ENCODE measurements at regions of chr19 and their contacts with region 1.

Region 1: DNA sequence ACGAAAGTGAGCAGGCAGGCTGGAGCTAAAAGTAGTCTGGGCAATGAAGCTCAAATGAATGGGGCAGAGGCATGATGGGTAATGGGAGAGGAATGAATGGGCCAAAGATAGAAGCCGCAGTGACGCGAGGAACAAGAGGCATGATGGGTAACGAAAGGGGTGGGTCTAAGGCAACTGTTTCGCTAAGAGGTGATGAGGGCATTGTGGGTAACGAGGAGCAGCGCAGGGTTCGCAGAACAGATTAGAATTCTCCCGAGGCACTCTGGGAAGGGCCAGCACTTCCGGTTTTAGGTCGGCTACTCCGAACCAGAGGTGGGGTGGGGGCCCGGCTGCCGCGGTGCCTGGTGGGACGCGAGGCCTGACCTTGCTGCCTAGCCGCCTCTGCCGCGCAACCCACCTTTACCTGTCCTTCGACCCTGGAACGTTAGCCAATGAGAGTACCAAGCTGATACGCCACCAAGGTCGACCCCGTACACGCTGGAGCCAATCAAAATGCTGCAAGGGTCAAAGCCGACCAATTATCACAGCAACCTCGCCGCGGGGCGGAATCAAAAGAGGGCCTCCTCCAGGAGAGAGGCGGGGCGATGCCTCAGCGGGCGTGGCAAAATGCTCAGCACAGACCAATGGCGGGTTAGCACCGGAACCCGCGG is 563 bp upstream of the TOMM40 start:
- DNase-seq: no peak
- H3K4me3 ChIP-seq: peak overlapping the region; percentile 68 to 91 (median 80)
- H3K27ac ChIP-seq: peak overlapping the region; percentile 90 to 94 (median 92)
- H3K4me1 ChIP-seq: peaks cover 19 to 32% (median 31%) of the 10 kb centered on the region in 4 donors
- H3K27me3 ChIP-seq: no peaks in the 10 kb centered on the region
- CTCF ChIP-seq: no peak
- EP300 ChIP-seq: no peak
- POLR2A ChIP-seq: peak; percentile 6

Region 2: DNA sequence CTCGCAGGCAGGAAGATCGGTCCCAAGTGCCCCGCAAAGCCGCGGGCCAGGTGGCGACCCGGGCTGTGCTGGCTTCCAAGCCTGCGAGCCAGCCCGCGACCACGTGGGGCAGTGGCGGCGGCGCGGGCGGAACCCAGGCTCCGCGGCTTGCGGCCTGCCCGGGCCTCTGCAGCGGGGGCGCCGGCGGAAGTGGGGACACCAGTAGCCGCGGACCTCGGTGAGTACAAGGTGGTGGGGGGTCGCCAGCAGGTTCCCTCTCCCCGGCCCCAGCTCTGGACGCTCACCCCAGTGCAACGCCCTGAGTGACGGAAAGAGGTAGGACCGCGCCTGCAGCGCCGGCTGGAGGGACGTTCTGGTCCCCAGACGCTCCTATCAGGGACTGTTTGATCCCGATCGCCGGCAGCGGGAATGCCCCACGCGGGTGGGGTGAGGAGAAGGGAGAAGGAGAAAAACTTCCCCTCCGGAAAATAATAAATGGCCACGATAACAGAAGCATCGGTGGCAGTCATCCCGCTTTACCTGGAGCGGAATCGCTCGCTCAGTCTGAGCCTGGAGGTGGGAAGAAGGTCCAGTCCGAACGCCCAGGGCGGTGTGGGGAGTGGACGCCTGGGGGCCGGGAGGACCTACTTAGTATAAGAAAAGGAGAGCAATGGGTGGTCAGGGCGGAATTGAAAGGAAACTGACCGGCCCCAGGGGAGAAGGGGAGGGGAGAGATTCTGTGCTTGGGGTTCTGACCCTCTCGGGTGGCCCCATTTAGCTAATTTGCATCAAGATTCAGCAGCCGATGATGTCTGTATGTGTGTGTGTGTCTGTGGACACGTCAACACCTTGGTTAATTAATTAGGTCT is 188.8 kb after region 1 on chr19 and contains the start of gene GEMIN7:
- intact Hi-C with region 1: loop called (anchors 10 kb)
- DNase-seq: no peak
- H3K4me3 ChIP-seq: peak within 1 kb of the TSS; percentile 72 to 93 (median 82)
- H3K27ac ChIP-seq: peak within 1 kb of the TSS; percentile 76 to 78 (median 76)
- H3K4me1 ChIP-seq: peaks cover 33 to 50% (median 49%) of the 10 kb centered on the region in 4 donors
- H3K27me3 ChIP-seq: no peaks in the 10 kb centered on the region
- CTCF ChIP-seq: peak; percentile 19 to 34 (median 26)
- EP300 ChIP-seq: no peak
- POLR2A ChIP-seq: no peak
- total RNA-seq, gene GEMIN7: 12.3 to 19.1 (median 15.3) TPM